PC-3 (cell line): ENCODE measurements at regions of chr3 and their contacts with region 1.

Region 1: GRCh38 chr3:124986158-124987143 is 51.9 kb upstream of the MUC13 start:
- DNase-seq: peak; percentile 89
- ATAC-seq: peak; percentile 73
- H3K4me3 ChIP-seq: no peak overlapping the region
- H3K27ac ChIP-seq: peak overlapping the region; percentile 77
- H3K4me1 ChIP-seq: peaks cover 25% of the 10 kb centered on the region
- H3K27me3 ChIP-seq: no peaks in the 10 kb centered on the region
- CTCF ChIP-seq: peak; percentile 78

Region 2: GRCh38 chr3:124620600-124621063 is 365.8 kb before region 1 on chr3:
- CTCF ChIA-PET with region 1: no interaction called
- POLR2A ChIA-PET with region 1: no interaction called
- intact Hi-C with region 1: no loop called
- DNase-seq: no peak
- ATAC-seq: no peak
- H3K4me3 ChIP-seq: no peak overlapping the region
- H3K27ac ChIP-seq: no peak overlapping the region
- H3K4me1 ChIP-seq: no peaks in the 10 kb centered on the region; the same call in 1 of the 2 replicates
- H3K27me3 ChIP-seq: no peaks in the 10 kb centered on the region
- CTCF ChIP-seq: no peak

Region 3: DNA sequence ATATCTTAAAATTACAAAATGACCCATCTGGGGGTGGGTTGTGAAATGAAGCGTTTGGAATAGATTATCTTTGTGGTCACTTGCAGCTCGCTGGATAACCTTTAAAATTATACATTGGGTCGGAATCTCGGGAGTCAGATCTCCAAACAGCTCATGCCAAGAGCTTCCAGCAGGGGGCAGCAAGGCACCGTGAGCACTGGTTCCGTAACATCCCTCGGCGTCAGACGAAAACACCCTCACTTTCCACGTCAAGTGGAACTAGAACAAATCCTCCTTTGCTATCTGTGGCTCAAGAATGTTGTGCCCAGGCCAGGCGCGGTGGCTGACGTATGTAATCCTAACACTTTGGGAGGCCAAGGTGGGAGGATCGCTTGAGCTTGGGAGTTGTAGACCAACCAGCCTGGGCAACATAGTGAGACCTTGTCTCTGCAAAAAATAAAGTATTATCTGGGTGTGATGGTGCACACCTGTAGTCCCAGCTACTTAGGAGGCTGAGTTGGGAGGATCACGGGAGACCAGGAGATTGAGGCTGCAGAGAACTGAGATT is 225.1 kb before region 1 on chr3:
- CTCF ChIA-PET with region 1: no interaction called
- POLR2A ChIA-PET with region 1: no interaction called
- intact Hi-C with region 1: loop called (anchors 1 kb)
- DNase-seq: peak; percentile 81
- ATAC-seq: peak; percentile 87
- H3K4me3 ChIP-seq: no peak overlapping the region; the same call in 1 of the 2 replicates
- H3K27ac ChIP-seq: no peak overlapping the region
- H3K4me1 ChIP-seq: no peaks in the 10 kb centered on the region
- H3K27me3 ChIP-seq: no peaks in the 10 kb centered on the region
- CTCF ChIP-seq: peak; percentile 83

Region 4: DNA sequence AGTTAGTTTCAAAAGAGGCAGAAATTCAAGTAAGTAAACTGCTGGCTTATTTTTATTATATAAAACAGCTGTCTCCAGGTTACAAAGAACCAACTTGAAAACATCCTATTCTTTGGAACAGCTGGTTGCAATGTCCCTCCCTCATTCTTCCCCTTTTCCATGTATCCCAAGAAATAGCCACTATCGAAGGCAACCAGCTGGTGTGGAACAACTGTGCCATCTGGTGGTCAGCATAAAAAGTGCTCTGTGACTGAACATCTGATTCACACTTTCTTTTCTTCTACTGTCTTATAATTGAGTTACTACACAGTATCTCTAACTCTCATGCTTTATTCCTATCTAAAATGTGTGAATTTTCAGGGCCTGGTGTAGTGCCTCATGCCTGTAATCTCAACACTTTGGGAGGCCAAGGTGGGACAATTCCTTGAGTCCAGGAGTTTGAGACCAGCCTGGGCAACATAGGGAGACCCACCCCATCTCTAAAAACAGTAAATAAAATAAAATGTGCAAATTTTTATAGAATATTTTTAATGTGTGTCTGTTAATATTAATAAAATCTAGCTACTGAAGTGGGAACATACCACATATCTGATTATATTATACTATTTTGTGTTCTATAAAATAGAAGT is 599.3 kb after region 1 on chr3:
- CTCF ChIA-PET with region 1: no interaction called
- POLR2A ChIA-PET with region 1: no interaction called
- intact Hi-C with region 1: loop called (anchors 1 kb)
- DNase-seq: peak; percentile 64
- ATAC-seq: peak; percentile 67
- H3K4me3 ChIP-seq: no peak overlapping the region
- H3K27ac ChIP-seq: no peak overlapping the region
- H3K4me1 ChIP-seq: no peaks in the 10 kb centered on the region; the same call in 1 of the 2 replicates
- H3K27me3 ChIP-seq: no peaks in the 10 kb centered on the region
- CTCF ChIP-seq: peak; percentile 78